Left colon (tissue), 2 donors: ENCODE measurements at regions of chr1 and their contacts with region 1.

Region 1: GRCh38 chr1:184237588-184237987 is 149.2 kb upstream of the C1orf21 start:
- DNase-seq: no peak
- ATAC-seq: no peak

Region 2: GRCh38 chr1:184127520-184127919 is 110.1 kb before region 1 on chr1:
- intact Hi-C with region 1: no loop called
- DNase-seq: no peak
- ATAC-seq: no peak

Region 3: DNA sequence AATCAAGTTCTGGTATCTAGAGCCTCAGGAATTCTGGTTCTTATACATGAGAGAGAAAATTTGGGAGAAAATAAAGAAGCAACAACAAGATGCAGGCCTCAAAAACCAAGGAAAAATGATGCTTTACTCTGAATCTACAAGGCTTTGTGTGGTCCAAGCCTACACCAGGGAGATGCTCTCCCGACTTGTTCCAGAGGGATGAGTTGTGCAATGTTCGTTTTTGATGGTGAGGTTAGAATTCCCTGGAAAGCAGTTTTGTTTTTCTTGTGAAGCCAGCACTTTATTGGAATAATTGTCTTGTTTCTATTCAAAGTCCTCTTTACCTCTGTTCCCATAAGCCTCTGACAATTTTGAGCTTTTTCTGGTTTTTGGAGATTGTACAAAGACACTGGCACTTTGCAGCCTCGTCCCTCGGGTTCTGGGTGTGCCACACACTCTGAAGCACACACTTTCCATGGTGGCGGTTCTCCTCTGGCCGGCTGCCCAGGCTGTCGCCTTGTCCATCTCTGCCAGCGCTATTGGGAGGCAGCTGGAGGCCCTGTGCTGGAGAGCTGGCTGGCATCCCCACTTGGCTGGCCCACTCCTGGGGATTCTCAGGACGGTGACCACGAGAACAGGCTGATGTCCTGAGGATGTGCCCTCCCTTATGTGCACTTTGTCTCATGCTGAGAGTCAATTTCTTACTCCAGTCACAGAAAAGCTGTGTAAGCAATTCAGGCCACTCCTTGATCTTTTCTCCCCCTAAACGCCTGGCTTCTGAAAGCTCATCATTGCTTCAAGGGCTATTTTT is 446.9 kb after region 1 on chr1:
- intact Hi-C with region 1: loop called in 1 of 2 experiments (anchors 10 kb)
- DNase-seq: peak in 1 of 2 donors; percentile 15
- ATAC-seq: no peak